ENCODE measurements at regions of chr9 and their contacts with region 1.

Region 1: GRCh38 chr9:96818535-96818934 is 35.8 kb downstream of the ZNF782 start:
- DNase-seq: no peak
- ATAC-seq: no peak
- H3K4me3 ChIP-seq: no peak overlapping the region
- H3K27ac ChIP-seq: no peak overlapping the region
- H3K4me1 ChIP-seq: no peaks in the 10 kb centered on the region
- H3K27me3 ChIP-seq: no peaks in the 10 kb centered on the region
- CTCF ChIP-seq: no peak
- POLR2A ChIP-seq: no peak
- RAD21 ChIP-seq: no peak

Region 2: GRCh38 chr9:96769989-96770388 is 48.5 kb before region 1 on chr9:
- CTCF ChIA-PET with region 1: no interaction called
- POLR2A ChIA-PET with region 1: no interaction called
- RAD21 ChIA-PET with region 1: no interaction called
- intact Hi-C with region 1: loop called (anchors 5 kb)
- DNase-seq: no peak
- ATAC-seq: no peak
- H3K4me3 ChIP-seq: no peak overlapping the region
- H3K27ac ChIP-seq: no peak overlapping the region
- H3K4me1 ChIP-seq: no peaks in the 10 kb centered on the region
- H3K27me3 ChIP-seq: no peaks in the 10 kb centered on the region
- CTCF ChIP-seq: no peak
- POLR2A ChIP-seq: no peak
- RAD21 ChIP-seq: no peak